Activated CD4-positive, alpha-beta T cell treated with anti-CD3 and anti-CD28 coated beads for 36 hours (primary cell): ENCODE measurements at regions of chr6 and their contacts with region 1.

Region 1: GRCh38 chr6:145633981-145634627 is 101.2 kb downstream of the EPM2A start:
- DNase-seq: peak; percentile 91
- ATAC-seq: peak; percentile 92
- H3K4me3 Mint-ChIP-seq: no peak overlapping the region
- H3K27ac Mint-ChIP-seq: no peak overlapping the region
- H3K4me1 Mint-ChIP-seq: no peaks in the 10 kb centered on the region
- H3K27me3 Mint-ChIP-seq: no peaks in the 10 kb centered on the region

Region 2: GRCh38 chr6:145406508-145407182 is 227.5 kb before region 1 on chr6:
- CTCF ChIA-PET with region 1: no interaction called
- POLR2A ChIA-PET with region 1: no interaction called
- intact Hi-C with region 1: no loop called
- DNase-seq: no peak
- ATAC-seq: no peak
- H3K4me3 Mint-ChIP-seq: no peak overlapping the region
- H3K27ac Mint-ChIP-seq: no peak overlapping the region
- H3K4me1 Mint-ChIP-seq: no peaks in the 10 kb centered on the region
- H3K27me3 Mint-ChIP-seq: peaks cover 2% of the 10 kb centered on the region

Region 3: DNA sequence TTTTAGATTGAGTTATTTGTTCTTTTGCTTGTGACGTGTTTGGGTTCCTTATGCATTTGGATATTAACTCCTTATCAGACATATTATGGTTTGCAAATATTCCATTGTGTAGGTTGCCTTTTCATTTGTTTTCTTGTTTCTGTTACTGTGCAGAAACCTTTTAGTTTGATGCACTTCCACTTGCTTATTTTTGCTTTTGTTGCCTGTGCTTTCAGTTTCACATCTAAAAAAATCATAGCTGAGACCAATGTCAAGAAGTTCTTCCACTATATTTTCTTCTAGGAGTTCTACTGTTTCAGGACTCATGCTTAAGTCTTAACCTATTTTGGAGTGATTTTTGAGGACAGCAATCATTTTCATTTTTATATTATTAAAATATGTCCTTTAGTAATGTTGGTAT is 12.3 kb before region 1 on chr6:
- CTCF ChIA-PET with region 1: interaction called, 14 read pairs
- POLR2A ChIA-PET with region 1: no interaction called
- intact Hi-C with region 1: no loop called
- DNase-seq: no peak
- ATAC-seq: no peak
- H3K4me3 Mint-ChIP-seq: no peak overlapping the region
- H3K27ac Mint-ChIP-seq: no peak overlapping the region
- H3K4me1 Mint-ChIP-seq: no peaks in the 10 kb centered on the region
- H3K27me3 Mint-ChIP-seq: no peaks in the 10 kb centered on the region